H1 (cell line): ENCODE measurements at regions of chr17 and their contacts with region 1.

Region 1: GRCh38 chr17:29070781-29071702 is 28.1 kb downstream of the PIPOX start:
- DNase-seq: no peak
- H3K4me3 ChIP-seq: no peak overlapping the region
- H3K27ac ChIP-seq: no peak overlapping the region
- H3K4me1 ChIP-seq: peaks cover 9 to 25% (median 13%) of the 10 kb centered on the region in 4 experiments
- H3K27me3 ChIP-seq: 0 out of 7 replicates have a peak, but pooled peaks cover 0 to 2% (median 0%) of the 10 kb centered on the region in 4 experiments
- CTCF ChIP-seq: no peak
- EP300 ChIP-seq: no peak
- POLR2A ChIP-seq: no peak
- RAD21 ChIP-seq: no peak

Region 2: GRCh38 chr17:28937044-28937729 is 133.9 kb before region 1 on chr17:
- CTCF ChIA-PET with region 1: no interaction called
- POLR2A ChIA-PET with region 1: no interaction called
- DNase-seq: no peak
- H3K4me3 ChIP-seq: no peak overlapping the region
- H3K27ac ChIP-seq: no peak overlapping the region
- H3K4me1 ChIP-seq: peaks cover 2 to 22% (median 16%) of the 10 kb centered on the region in 4 experiments; a peak in 5 of 7 replicates
- H3K27me3 ChIP-seq: no peaks in the 10 kb centered on the region
- CTCF ChIP-seq: no peak
- EP300 ChIP-seq: no peak
- POLR2A ChIP-seq: no peak
- RAD21 ChIP-seq: no peak

Region 3: GRCh38 chr17:29061036-29061435 is 10.0 kb before region 1 on chr17:
- CTCF ChIA-PET with region 1: interaction called, 4 read pairs
- POLR2A ChIA-PET with region 1: interaction called, 19 read pairs
- DNase-seq: no peak
- H3K4me3 ChIP-seq: no peak overlapping the region
- H3K27ac ChIP-seq: no peak overlapping the region
- H3K4me1 ChIP-seq: peaks cover 9 to 26% (median 18%) of the 10 kb centered on the region in 4 experiments
- H3K27me3 ChIP-seq: 0 out of 7 replicates have a peak, but pooled peaks cover 0 to under 1% (median 0%) of the 10 kb centered on the region in 4 experiments
- CTCF ChIP-seq: no peak
- EP300 ChIP-seq: no peak
- POLR2A ChIP-seq: no peak
- RAD21 ChIP-seq: no peak

Region 4: GRCh38 chr17:29180034-29180787 is 109.2 kb after region 1 on chr17 and contains the start of gene MYO18A:
- CTCF ChIA-PET with region 1: no interaction called
- POLR2A ChIA-PET with region 1: no interaction called
- DNase-seq: peak; percentile 41 to 89
- H3K4me3 ChIP-seq: peak within 1 kb of the TSS; percentile 41 to 70 (median 63)
- H3K27ac ChIP-seq: no peak within 1 kb of the TSS; the same call in 1 of the 2 replicates
- H3K4me1 ChIP-seq: peaks cover 6 to 30% (median 16%) of the 10 kb centered on the region in 4 experiments
- H3K27me3 ChIP-seq: peaks cover 0 to 10% (median 5%) of the 10 kb centered on the region in 4 experiments; a peak in 3 of 7 replicates
- CTCF ChIP-seq: peak; percentile 85 to 99 (median 90)
- EP300 ChIP-seq: no peak
- POLR2A ChIP-seq: no peak
- RAD21 ChIP-seq: peak; percentile 40 to 74
- total RNA-seq, gene MYO18A: 36.6 and 43.8 TPM in 2 replicates